Activated CD8-positive, alpha-beta T cell treated with anti-CD3 and anti-CD28 coated beads, Interleukin-2, amount 10 ng/mL, durations not matched to agents 7 days and 5 days (primary cell): ENCODE measurements at regions of chr1 and their contacts with region 1.

Region 1: GRCh38 chr1:23098463-23099170 is 70.0 kb downstream of the LUZP1 start:
- DNase-seq: peak; percentile 77
- ATAC-seq: peak; percentile 32
- H3K4me3 Mint-ChIP-seq: no peak overlapping the region
- H3K27ac Mint-ChIP-seq: no peak overlapping the region
- H3K4me1 Mint-ChIP-seq: peaks cover 44% of the 10 kb centered on the region
- H3K27me3 Mint-ChIP-seq: no peaks in the 10 kb centered on the region

Region 2: GRCh38 chr1:22625262-22625925 is 473.2 kb before region 1 on chr1:
- CTCF ChIA-PET with region 1: no interaction called
- POLR2A ChIA-PET with region 1: no interaction called
- DNase-seq: no peak
- ATAC-seq: no peak
- H3K4me3 Mint-ChIP-seq: no peak overlapping the region
- H3K27ac Mint-ChIP-seq: no peak overlapping the region
- H3K4me1 Mint-ChIP-seq: no peaks in the 10 kb centered on the region
- H3K27me3 Mint-ChIP-seq: peaks cover 15% of the 10 kb centered on the region

Region 3: DNA sequence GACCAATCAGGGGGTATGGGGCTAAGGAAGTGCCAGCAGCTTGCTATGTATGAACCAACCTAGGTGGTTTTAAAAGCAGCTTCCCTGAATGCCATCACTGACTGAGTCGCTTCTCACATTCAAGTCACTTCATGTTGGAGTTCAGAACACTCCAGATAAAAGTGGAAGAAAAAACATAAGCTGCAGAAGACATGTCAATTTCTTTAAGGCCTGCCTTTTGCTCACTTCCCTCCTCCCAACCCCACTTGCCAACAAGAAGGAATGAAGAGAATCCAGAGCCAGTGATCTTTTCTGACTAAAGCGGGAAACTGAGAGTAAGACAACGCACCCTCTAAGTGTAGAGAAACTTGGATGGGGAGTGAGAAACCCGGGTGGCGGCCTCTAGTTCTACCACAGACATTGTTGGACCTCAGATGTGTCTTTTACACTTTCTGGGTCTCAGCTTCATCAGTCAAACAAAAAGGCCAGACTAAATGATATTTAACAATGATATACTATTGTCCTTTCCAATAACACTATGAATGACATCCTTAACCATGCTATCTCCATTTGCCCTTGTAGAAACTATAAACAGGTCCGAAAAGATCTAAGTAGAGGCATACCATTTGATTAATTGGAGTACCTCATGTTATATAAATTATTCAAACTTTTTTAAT is 15.9 kb after region 1 on chr1:
- CTCF ChIA-PET with region 1: interaction called, 92 read pairs
- POLR2A ChIA-PET with region 1: interaction called, 6 read pairs
- DNase-seq: no peak
- ATAC-seq: no peak
- H3K4me3 Mint-ChIP-seq: no peak overlapping the region
- H3K27ac Mint-ChIP-seq: no peak overlapping the region
- H3K4me1 Mint-ChIP-seq: peaks cover 74% of the 10 kb centered on the region
- H3K27me3 Mint-ChIP-seq: peaks cover 2% of the 10 kb centered on the region

Region 4: DNA sequence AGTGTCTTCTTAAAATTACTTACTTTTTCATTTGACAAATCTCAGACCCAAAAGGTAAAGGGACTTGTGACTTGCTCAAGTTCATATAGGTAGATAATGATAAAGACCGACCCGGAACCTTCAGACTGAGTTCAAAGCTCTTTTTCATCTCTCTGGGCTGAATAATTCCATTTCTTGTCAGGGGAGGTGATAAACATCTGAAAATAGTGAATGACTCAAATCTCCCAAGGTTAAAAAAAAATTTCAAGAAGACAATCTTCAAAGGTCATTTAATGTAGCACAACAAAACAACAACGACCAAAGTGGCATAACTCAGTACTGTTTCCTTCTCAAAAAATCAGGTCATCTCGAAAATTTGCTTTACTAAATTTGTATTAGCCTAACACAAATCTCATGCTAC is 49.5 kb after region 1 on chr1:
- CTCF ChIA-PET with region 1: interaction called, 12 read pairs
- POLR2A ChIA-PET with region 1: no interaction called
- DNase-seq: no peak
- ATAC-seq: peak; percentile 69
- H3K4me3 Mint-ChIP-seq: peak overlapping the region; percentile 1
- H3K27ac Mint-ChIP-seq: no peak overlapping the region
- H3K4me1 Mint-ChIP-seq: peaks cover 17% of the 10 kb centered on the region
- H3K27me3 Mint-ChIP-seq: no peaks in the 10 kb centered on the region

Region 5: GRCh38 chr1:23168457-23169194 is 70.0 kb after region 1 on chr1 and contains the start of gene LUZP1:
- CTCF ChIA-PET with region 1: interaction called, 37 read pairs
- POLR2A ChIA-PET with region 1: interaction called, 6 read pairs
- DNase-seq: peak; percentile 90
- ATAC-seq: peak; percentile 85
- H3K4me3 Mint-ChIP-seq: peak within 1 kb of the TSS; percentile 92
- H3K27ac Mint-ChIP-seq: peak within 1 kb of the TSS; percentile 85
- H3K4me1 Mint-ChIP-seq: peaks cover 24% of the 10 kb centered on the region
- H3K27me3 Mint-ChIP-seq: peaks cover 7% of the 10 kb centered on the region
- total RNA-seq, gene LUZP1: 15.2 to 16.0 TPM

Region 6: DNA sequence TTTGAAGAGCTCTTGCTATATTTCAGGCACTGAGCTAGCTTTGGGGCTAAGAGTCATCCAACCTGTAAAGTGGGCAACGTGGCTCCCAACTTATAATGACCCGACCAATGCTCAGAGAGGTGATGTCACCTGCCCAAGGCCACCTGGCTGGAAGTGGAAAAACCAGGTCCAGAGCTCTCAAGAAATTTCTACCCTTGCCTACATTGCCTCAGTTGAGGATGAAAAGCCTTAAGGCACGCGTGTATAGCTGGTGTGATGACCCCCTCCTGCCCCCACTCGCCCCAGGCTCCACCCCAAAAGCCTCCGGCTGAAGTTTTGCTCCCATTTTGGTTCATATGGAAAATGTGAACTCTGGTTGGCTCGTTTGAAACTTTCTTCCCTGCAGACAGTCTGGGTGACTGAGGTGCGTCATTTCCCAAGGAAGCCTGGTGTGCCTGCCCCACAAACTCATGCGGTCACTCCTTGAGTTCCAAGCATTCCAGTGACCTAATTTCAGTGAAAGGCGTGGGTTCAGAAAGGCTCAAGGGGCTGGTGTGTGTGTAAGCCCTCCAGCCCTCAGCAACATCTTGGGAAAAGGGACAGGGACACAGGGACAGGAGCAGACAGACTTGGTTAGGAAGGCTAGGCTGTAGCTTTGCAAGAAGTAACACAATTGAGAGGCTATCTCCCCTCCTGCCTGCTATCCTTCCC is 98.2 kb after region 1 on chr1:
- CTCF ChIA-PET with region 1: interaction called, 21 read pairs
- POLR2A ChIA-PET with region 1: no interaction called
- DNase-seq: no peak
- ATAC-seq: no peak
- H3K4me3 Mint-ChIP-seq: no peak overlapping the region
- H3K27ac Mint-ChIP-seq: no peak overlapping the region
- H3K4me1 Mint-ChIP-seq: no peaks in the 10 kb centered on the region
- H3K27me3 Mint-ChIP-seq: peaks cover 6% of the 10 kb centered on the region